Vagina (tissue), 2 donors: ENCODE measurements at regions of chr10 and their contacts with region 1.

Region 1: DNA sequence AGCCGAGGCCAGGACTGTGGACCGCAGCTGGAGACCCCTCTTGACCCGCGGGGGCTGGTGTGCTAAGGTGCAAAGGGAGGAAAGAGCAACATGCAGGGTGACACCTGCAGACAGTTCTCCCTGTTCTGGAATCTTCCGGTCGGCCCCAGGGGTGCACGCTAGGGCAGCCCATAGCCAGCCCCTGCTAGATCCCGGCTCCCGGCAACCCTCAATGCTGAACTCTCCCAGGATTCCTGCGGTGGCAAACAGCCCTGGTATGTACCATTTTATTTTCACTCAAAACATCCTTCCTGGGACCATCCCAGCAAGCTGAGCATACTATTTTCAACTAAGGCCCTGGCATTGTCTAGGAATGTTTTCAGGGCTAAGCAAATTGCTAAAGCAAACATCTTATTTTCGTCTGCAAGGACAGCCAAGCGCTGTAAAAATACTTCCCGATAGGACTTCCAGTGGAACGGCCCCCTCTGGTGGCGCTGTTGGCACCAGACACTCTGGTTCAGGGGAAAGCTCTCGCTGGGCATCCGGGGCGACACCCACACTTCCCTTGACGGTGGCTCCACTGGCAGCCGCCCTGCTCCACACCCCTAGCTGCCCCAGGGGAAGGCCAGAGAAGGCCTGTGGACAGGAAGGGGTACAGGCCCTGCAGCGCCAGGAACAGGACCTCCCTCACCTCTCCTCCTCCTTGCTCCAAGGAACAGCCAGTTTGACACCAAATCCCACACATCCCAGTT is 99.4 kb downstream of the CTBP2 start:
- DNase-seq: no peak
- H3K4me3 ChIP-seq: peak overlapping the region; percentile 5 to 14
- H3K27ac ChIP-seq: peak overlapping the region; percentile 97
- H3K4me1 ChIP-seq: peaks cover 100% of the 10 kb centered on the region
- H3K27me3 ChIP-seq: no peaks in the 10 kb centered on the region
- CTCF ChIP-seq: peak; percentile 26 to 82 (median 72)
- POLR2A ChIP-seq: no peak

Region 2: DNA sequence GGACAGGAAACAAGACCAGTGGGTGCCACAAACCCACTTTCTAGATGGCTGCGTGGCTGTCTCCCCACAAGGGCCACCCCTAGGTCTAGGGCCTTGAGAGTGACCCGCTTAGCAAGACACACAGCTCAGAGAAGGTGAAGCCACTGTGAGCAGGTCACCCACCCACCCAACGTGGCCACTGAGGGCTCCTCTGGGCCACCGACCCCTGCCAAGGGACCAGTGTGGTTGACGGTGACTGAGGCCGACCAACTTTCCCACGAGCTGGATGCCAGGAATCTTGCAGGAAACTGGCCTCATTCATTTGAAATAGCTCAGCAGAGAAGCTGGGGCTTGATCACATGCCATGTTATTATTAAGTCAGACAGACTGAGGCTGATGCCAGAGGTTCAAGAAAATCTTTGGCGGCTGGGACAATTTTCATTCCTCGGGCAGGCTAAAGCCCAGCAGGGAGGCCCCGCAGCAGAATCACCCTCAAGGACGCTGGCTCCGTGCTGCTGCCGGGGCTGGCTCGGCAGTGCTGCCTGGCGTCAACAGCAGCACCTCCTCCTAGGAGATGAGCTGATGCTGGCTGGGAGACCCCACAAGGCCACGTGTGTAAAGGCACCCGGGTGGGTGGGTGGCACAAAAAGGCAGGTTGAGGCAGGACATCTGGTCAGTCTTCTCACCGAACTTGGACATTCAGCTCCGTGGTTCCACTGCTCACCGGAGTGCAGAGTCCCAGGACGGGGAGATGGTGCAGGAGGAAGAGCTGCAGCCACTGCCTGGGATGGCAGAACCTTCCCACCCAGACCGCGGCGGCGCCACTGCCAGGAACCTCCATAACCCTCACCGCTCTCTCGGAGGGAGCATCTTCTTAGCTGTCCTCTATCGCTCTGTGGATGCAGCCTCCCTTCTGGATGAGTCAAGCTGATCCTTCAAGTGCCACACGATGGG is 61.3 kb before region 1 on chr10:
- intact Hi-C with region 1: loop called (anchors 5 kb)
- DNase-seq: no peak
- H3K4me3 ChIP-seq: peak overlapping the region in 1 of 2 donors; percentile 16
- H3K27ac ChIP-seq: peak overlapping the region; percentile 72
- H3K4me1 ChIP-seq: peaks cover 48% of the 10 kb centered on the region
- H3K27me3 ChIP-seq: no peaks in the 10 kb centered on the region
- CTCF ChIP-seq: no peak
- POLR2A ChIP-seq: no peak

Region 3: DNA sequence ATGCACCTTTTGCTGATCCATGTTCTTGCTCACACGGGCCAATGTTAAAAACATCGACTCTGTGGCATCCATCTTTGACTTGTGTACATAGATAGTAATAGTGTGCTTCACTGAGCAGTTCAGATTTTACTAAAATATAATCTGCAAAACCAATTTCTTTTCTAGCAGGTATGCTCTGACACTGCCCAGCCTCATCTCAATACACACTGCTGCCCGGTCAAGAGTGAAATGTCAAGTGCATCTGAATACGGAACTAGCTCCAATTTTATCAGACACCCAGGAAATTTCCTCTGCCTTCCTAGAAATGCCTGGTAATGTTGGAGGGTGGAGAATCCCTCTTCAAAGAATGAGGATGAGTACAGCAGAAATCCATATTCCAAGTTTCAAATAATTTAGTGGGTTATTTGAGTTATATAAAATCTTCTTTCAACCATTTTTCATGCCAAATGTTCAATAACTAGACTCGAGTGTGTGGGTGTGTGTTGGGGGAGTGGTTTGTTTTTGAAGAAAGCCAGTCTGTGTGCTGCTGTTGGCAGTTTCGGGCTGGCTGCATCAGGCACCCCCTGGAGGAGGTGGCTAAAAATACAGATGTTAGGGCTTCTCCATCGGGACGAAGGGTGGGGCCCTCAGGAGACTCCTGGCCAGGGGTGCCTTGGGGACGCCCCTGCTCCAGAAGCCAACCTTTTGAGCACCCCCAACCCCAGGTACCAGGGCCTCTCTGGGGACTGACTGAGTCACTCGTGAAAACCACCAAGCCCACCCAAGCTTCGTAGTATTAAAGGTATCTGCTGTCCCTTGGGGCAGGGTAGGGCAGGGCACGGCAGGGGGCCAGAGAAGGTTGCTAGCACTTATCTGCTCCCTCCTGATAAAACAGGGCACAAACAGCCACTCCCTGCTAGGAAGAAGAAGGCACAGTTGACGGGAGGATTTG is 84.0 kb after region 1 on chr10:
- intact Hi-C with region 1: loop called (anchors 5 kb)
- DNase-seq: no peak
- H3K4me3 ChIP-seq: no peak overlapping the region
- H3K27ac ChIP-seq: no peak overlapping the region
- H3K4me1 ChIP-seq: peaks cover 85% of the 10 kb centered on the region
- H3K27me3 ChIP-seq: no peaks in the 10 kb centered on the region
- CTCF ChIP-seq: no peak
- POLR2A ChIP-seq: no peak